ENCODE measurements at regions of chr12 and their contacts with region 1.

Region 1: GRCh38 chr12:8697476-8698131 is at the start of gene RIMKLB:
- DNase-seq: peak; percentile 78
- ATAC-seq: peak; percentile 85
- H3K4me3 Mint-ChIP-seq: peak within 1 kb of the TSS; percentile 96
- H3K27ac Mint-ChIP-seq: peak within 1 kb of the TSS; percentile 93
- H3K4me1 Mint-ChIP-seq: peaks cover 46% of the 10 kb centered on the region
- H3K27me3 Mint-ChIP-seq: no peaks in the 10 kb centered on the region
- CTCF ChIP-seq: no peak
- total RNA-seq, gene RIMKLB: 31.0 and 31.9 TPM in 2 replicates

Region 2: DNA sequence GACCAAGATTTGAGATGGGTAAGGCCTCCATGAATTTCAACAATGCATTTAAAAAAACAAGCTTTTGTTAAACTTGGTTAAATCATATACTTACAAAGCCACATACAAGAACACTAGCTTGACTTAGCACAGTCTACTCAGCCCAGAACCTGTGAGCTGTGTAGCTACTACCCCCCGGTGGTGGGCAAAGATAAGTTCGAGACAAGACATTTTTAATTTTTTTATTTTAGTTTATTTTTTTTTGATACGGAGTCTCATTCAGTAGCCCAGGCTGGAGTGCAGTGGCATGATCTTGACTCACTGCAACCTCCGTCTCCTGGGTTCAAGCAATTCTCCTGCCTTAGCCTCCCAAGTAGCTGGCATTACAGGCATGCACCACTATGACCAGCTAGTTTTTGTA is 619.2 kb before region 1 on chr12:
- CTCF ChIA-PET with region 1: no interaction called
- POLR2A ChIA-PET with region 1: no interaction called
- intact Hi-C with region 1: loop called (anchors 10 kb)
- DNase-seq: no peak
- ATAC-seq: no peak
- H3K4me3 Mint-ChIP-seq: no peak overlapping the region
- H3K27ac Mint-ChIP-seq: no peak overlapping the region
- H3K4me1 Mint-ChIP-seq: peaks cover 38% of the 10 kb centered on the region
- H3K27me3 Mint-ChIP-seq: peaks cover under 1% of the 10 kb centered on the region
- CTCF ChIP-seq: no peak

Region 3: GRCh38 chr12:8914716-8915526 is 217.3 kb after region 1 on chr12:
- CTCF ChIA-PET with region 1: no interaction called
- POLR2A ChIA-PET with region 1: interaction called, 3 read pairs
- intact Hi-C with region 1: loop called (anchors 1 kb)
- DNase-seq: peak; percentile 65
- ATAC-seq: peak; percentile 83
- H3K4me3 Mint-ChIP-seq: no peak overlapping the region
- H3K27ac Mint-ChIP-seq: no peak overlapping the region
- H3K4me1 Mint-ChIP-seq: peaks cover 25% of the 10 kb centered on the region
- H3K27me3 Mint-ChIP-seq: no peaks in the 10 kb centered on the region
- CTCF ChIP-seq: no peak